ENCODE measurements at regions of chr15 and their contacts with region 1.

Region 1: GRCh38 chr15:45198337-45199135 is 10.8 kb upstream of the SHF start:
- DNase-seq: peak; percentile 94 to 98 (median 96)
- H3K4me3 ChIP-seq: peak overlapping the region; percentile 73
- H3K27ac ChIP-seq: peak overlapping the region; percentile 80 to 97
- H3K4me1 ChIP-seq: no peaks in the 10 kb centered on the region
- H3K27me3 ChIP-seq: no peaks in the 10 kb centered on the region
- CTCF ChIP-seq: peak; percentile 44 to 86 (median 82)
- EP300 ChIP-seq: no peak
- POLR2A ChIP-seq: peak; percentile 98

Region 2: GRCh38 chr15:45150269-45150880 is 48.2 kb before region 1 on chr15:
- intact Hi-C with region 1: no loop called
- DNase-seq: no peak
- H3K4me3 ChIP-seq: no peak overlapping the region
- H3K27ac ChIP-seq: no peak overlapping the region
- H3K4me1 ChIP-seq: no peaks in the 10 kb centered on the region
- H3K27me3 ChIP-seq: no peaks in the 10 kb centered on the region
- CTCF ChIP-seq: no peak
- EP300 ChIP-seq: no peak
- POLR2A ChIP-seq: no peak

Region 3: DNA sequence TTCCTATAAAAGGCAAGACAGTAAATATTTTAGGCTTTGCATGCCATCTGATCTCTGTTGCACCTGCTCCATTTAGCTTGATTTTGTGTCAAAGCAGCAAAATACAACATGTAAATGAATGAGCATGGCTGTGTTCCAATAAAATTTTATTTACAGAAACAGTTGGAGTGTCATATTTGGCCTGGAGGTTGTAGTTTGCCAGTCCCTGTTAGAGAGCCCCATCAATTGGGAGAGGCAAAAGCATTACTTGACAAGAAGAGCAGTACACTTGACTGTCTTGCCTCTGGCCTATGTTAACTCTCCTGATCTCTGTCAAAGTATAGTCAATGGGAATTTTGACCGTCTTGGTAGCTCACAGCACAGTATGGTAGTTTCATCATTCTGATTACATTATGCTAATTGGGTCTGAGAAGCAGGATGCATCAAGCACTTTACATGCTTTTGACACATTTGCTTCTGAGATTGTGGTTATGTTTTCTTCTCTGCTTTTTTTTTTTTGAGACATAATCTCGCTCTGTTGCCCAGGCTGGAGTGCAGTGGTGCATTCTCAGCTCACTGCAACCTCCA is 88.9 kb after region 1 on chr15:
- intact Hi-C with region 1: loop called in 1 of 4 experiments (anchors 10 kb)
- DNase-seq: no peak
- H3K4me3 ChIP-seq: no peak overlapping the region
- H3K27ac ChIP-seq: no peak overlapping the region
- H3K4me1 ChIP-seq: no peaks in the 10 kb centered on the region
- H3K27me3 ChIP-seq: no peaks in the 10 kb centered on the region
- CTCF ChIP-seq: no peak
- EP300 ChIP-seq: no peak
- POLR2A ChIP-seq: no peak